Head of caudate nucleus (tissue), 42 donors: ENCODE measurements at regions of chr6 and their contacts with region 1.

Region 1: GRCh38 chr6:149863697-149864577 is at the start of gene LRP11:
- DNase-seq: peak; percentile 66 to 96 (median 89)

Region 2: DNA sequence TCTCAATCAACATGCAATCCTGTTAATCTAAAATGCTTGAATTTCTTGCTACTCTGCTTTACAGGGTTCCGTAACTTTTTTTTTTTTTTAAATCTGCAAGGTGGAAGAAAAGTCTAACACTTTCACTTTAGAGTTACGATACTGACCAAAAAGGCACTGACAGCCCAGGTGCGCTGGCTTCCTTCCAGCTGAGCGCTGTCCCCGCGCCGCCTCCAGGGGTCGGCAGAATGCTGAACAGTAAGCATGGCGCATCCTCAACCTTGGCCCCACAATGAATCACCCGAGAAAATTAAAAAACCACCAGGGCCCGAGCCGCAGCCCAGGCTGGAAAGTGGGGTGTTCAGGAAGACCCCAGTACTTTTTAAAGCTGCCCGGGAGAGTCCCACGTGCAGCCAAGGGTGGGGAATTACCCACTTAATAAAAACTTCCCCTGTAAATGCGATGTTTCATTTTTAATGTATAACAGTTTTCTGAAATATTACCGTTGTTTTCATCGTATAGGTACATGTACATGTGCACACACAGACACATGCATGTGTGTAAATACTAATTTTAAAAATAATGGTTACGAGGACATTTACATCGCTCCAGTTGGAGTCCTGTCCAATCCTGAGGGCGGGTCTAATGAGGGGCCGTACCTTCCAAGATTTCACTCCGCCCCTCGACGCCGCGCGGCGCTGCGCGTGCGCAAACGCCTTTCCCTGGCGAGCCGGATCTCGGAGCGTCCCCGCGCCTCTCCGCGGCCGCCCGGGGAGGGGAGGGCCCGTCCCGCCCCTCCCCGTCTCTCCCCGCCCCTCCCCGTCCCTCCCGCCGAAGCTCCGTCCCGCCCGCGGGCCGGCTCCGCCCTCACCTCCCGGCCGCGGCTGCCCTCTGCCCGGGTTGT is 298.2 kb before region 1 on chr6 and contains the start of gene GINM1:
- intact Hi-C with region 1: loop called (anchors 10 kb)
- DNase-seq: peak; percentile 84 to 97 (median 93)